ENCODE measurements at regions of chr10 and their contacts with region 1.

Region 1: DNA sequence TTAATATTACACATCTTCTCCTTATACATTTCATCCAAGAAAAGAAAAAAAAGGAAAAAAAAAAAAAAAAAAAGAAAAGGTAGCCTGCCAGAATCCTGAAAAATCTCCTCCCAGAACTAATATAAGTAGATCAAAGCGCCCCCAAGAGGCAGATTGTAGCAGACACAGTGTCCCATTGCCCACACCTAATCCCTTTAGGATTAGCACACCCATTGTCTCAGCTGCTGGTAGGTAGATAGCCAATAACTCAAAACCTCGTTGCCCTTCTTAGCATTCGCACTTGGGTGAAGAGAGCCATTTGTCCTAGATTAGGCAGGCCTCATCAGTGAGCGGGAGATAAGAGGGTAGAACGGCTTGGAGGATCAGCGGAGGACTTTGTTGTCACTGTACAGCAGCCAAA is 100.2 kb upstream of the SORCS1 start:
- DNase-seq: peak; percentile 60
- H3K4me3 ChIP-seq: no peak overlapping the region
- H3K27ac ChIP-seq: no peak overlapping the region
- H3K4me1 ChIP-seq: no peaks in the 10 kb centered on the region
- H3K27me3 ChIP-seq: no peaks in the 10 kb centered on the region
- CTCF ChIP-seq: peak; percentile 76

Region 2: GRCh38 chr10:106866244-106866845 is 398.4 kb before region 1 on chr10:
- CTCF ChIA-PET with region 1: interaction called, 10 read pairs
- POLR2A ChIA-PET with region 1: interaction called, 5 read pairs
- intact Hi-C with region 1: no loop called
- DNase-seq: no peak
- H3K4me3 ChIP-seq: no peak overlapping the region
- H3K27ac ChIP-seq: no peak overlapping the region
- H3K4me1 ChIP-seq: no peaks in the 10 kb centered on the region
- H3K27me3 ChIP-seq: no peaks in the 10 kb centered on the region
- CTCF ChIP-seq: no peak

Region 3: GRCh38 chr10:107091126-107091525 is 173.6 kb before region 1 on chr10:
- CTCF ChIA-PET with region 1: no interaction called
- POLR2A ChIA-PET with region 1: no interaction called
- intact Hi-C with region 1: no loop called
- DNase-seq: peak; percentile 65
- H3K4me3 ChIP-seq: no peak overlapping the region
- H3K27ac ChIP-seq: no peak overlapping the region
- H3K4me1 ChIP-seq: peaks cover 8% of the 10 kb centered on the region
- H3K27me3 ChIP-seq: no peaks in the 10 kb centered on the region
- CTCF ChIP-seq: no peak

Region 4: DNA sequence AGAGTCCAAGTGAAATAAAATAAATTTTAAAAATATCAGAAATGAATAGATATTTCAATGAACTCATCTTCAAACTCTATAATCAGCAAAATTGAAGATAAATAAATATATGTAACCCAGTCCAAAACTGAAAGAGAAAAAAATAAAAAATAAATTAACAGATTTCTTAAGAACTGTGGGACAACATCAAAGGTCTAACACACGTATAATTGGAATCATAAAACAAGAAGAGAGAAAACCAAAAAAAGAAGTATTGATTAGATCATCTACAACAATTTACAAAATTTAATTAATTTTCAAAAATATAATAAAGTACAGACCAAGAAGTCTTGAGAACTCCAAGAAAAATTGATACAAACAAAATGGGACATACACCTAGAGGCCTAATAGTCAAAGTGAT is 525.5 kb after region 1 on chr10:
- CTCF ChIA-PET with region 1: no interaction called
- POLR2A ChIA-PET with region 1: no interaction called
- intact Hi-C with region 1: no loop called
- DNase-seq: no peak
- H3K4me3 ChIP-seq: no peak overlapping the region
- H3K27ac ChIP-seq: no peak overlapping the region
- H3K4me1 ChIP-seq: no peaks in the 10 kb centered on the region
- H3K27me3 ChIP-seq: no peaks in the 10 kb centered on the region
- CTCF ChIP-seq: no peak